Natural killer cell (primary cell): ENCODE measurements at regions of chr19 and their contacts with region 1.

Region 1: DNA sequence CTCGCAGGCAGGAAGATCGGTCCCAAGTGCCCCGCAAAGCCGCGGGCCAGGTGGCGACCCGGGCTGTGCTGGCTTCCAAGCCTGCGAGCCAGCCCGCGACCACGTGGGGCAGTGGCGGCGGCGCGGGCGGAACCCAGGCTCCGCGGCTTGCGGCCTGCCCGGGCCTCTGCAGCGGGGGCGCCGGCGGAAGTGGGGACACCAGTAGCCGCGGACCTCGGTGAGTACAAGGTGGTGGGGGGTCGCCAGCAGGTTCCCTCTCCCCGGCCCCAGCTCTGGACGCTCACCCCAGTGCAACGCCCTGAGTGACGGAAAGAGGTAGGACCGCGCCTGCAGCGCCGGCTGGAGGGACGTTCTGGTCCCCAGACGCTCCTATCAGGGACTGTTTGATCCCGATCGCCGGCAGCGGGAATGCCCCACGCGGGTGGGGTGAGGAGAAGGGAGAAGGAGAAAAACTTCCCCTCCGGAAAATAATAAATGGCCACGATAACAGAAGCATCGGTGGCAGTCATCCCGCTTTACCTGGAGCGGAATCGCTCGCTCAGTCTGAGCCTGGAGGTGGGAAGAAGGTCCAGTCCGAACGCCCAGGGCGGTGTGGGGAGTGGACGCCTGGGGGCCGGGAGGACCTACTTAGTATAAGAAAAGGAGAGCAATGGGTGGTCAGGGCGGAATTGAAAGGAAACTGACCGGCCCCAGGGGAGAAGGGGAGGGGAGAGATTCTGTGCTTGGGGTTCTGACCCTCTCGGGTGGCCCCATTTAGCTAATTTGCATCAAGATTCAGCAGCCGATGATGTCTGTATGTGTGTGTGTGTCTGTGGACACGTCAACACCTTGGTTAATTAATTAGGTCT is at the start of gene GEMIN7:
- DNase-seq: peak; percentile 79 to 86
- ATAC-seq: peak; percentile 62 to 72 (median 66)
- H3K4me3 ChIP-seq: peak within 1 kb of the TSS; percentile 71
- H3K4me3 Mint-ChIP-seq: peak within 1 kb of the TSS; percentile 97
- H3K27ac ChIP-seq: peak within 1 kb of the TSS; percentile 84
- H3K27ac Mint-ChIP-seq: peak within 1 kb of the TSS; percentile 96
- H3K4me1 ChIP-seq: peaks cover 51% of the 10 kb centered on the region
- H3K4me1 Mint-ChIP-seq: peaks cover 44 to 62% of the 10 kb centered on the region in 2 donors
- H3K27me3 ChIP-seq: no peaks in the 10 kb centered on the region
- H3K27me3 Mint-ChIP-seq: no peaks in the 10 kb centered on the region
- CTCF ChIP-seq: no peak
- total RNA-seq, gene GEMIN7: 27.7 to 28.7 (median 27.9) TPM

Region 2: DNA sequence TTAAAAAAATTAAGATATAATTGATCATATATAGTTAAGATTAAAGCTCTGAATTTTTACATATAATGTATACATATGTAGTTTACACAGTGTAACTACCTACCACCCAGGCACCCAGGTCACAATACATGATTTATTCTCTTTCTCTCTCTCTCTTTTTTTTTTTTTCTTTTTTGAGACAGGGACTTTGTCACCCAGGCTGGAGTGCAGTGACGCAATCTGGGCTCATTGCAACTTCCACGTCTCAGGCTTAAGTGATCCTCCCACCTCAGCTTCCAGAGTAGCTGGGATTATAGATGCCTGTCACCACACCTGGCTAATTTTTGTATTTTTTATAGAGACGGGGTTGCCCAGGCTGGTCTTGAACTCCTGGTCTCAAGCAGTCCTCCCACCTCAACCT is 59.2 kb before region 1 on chr19:
- intact Hi-C with region 1: no loop called
- DNase-seq: no peak
- ATAC-seq: no peak
- H3K4me3 ChIP-seq: no peak overlapping the region
- H3K4me3 Mint-ChIP-seq: peak overlapping the region; percentile 4
- H3K27ac ChIP-seq: no peak overlapping the region
- H3K27ac Mint-ChIP-seq: peak overlapping the region in 1 of 2 donors; percentile 64
- H3K4me1 ChIP-seq: peaks cover 17% of the 10 kb centered on the region
- H3K4me1 Mint-ChIP-seq: peaks cover 8 to 14% of the 10 kb centered on the region in 2 donors
- H3K27me3 ChIP-seq: no peaks in the 10 kb centered on the region
- H3K27me3 Mint-ChIP-seq: no peaks in the 10 kb centered on the region
- CTCF ChIP-seq: no peak

Region 3: GRCh38 chr19:45092747-45093678 is 13.7 kb after region 1 on chr19 and contains the start of gene PPP1R37:
- intact Hi-C with region 1: loop called (anchors 1 kb)
- DNase-seq: peak; percentile 86 to 98
- ATAC-seq: peak; percentile 63 to 83 (median 71)
- H3K4me3 ChIP-seq: peak within 1 kb of the TSS; percentile 93
- H3K4me3 Mint-ChIP-seq: peak within 1 kb of the TSS; percentile 99
- H3K27ac ChIP-seq: peak within 1 kb of the TSS; percentile 95
- H3K27ac Mint-ChIP-seq: peak within 1 kb of the TSS; percentile 97 to 99
- H3K4me1 ChIP-seq: peaks cover 83% of the 10 kb centered on the region
- H3K4me1 Mint-ChIP-seq: peaks cover 71 to 73% of the 10 kb centered on the region in 2 donors
- H3K27me3 ChIP-seq: no peaks in the 10 kb centered on the region
- H3K27me3 Mint-ChIP-seq: no peaks in the 10 kb centered on the region
- CTCF ChIP-seq: peak; percentile 11
- total RNA-seq, gene PPP1R37: 23.8 to 29.3 (median 25.0) TPM